ENCODE measurements at regions of chr4 and their contacts with region 1.

Region 1: GRCh38 chr4:158938220-158939044 is 164.4 kb upstream of the RAPGEF2 start:
- DNase-seq: no peak
- ATAC-seq: no peak
- H3K4me3 ChIP-seq: no peak overlapping the region
- H3K27ac ChIP-seq: no peak overlapping the region
- H3K4me1 ChIP-seq: peaks cover 0 to 10% (median 0%) of the 10 kb centered on the region in 9 donors
- H3K27me3 ChIP-seq: no peaks in the 10 kb centered on the region
- CTCF ChIP-seq: no peak

Region 2: GRCh38 chr4:158970812-158971211 is 32.4 kb after region 1 on chr4:
- intact Hi-C with region 1: no loop called
- DNase-seq: no peak
- ATAC-seq: no peak
- H3K4me3 ChIP-seq: no peak overlapping the region
- H3K27ac ChIP-seq: no peak overlapping the region
- H3K4me1 ChIP-seq: no peaks in the 10 kb centered on the region
- H3K27me3 ChIP-seq: no peaks in the 10 kb centered on the region
- CTCF ChIP-seq: no peak

Region 3: GRCh38 chr4:158996669-158997074 is 58.2 kb after region 1 on chr4:
- intact Hi-C with region 1: loop called in 1 of 10 experiments (anchors 10 kb)
- DNase-seq: peak in 1 of 2 donors; percentile 14
- ATAC-seq: peak in 7 of 8 donors; percentile 39 to 97 (median 62)
- H3K4me3 ChIP-seq: no peak overlapping the region
- H3K27ac ChIP-seq: no peak overlapping the region
- H3K4me1 ChIP-seq: peaks cover 0 to 10% (median 5%) of the 10 kb centered on the region in 9 donors
- H3K27me3 ChIP-seq: no peaks in the 10 kb centered on the region
- CTCF ChIP-seq: no peak

Measured in heart right ventricle (tissue), 16 donors.